ENCODE measurements at regions of chr6 and their contacts with region 1.

Region 1: DNA sequence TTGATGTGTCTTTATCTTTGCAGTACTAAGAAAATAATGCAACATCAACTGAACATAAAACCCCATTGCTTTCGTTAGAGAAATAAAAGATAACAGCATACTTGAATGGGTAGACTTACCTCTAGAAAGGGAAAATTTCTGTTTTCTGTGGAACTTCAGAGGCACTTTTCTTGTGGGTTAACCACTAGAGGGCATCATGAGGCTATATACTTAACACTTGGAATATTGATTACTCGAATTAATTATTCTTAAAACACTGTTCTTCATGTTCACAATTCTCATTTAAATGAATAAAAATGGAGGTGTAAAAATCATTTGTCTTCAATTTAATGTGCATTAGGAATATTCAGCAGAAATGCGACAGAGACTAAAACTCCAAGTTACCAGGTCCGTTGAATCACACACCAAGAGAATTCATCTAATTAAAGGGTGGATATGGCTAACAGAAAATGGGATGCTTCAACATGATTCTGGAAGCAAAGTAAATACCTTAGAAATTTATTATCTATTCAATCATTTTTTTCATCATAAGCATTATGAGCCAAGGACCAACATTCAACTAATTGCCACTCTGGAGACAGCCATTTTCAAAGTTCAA is 330.8 kb upstream of the PREP start:
- DNase-seq: no peak

Region 2: GRCh38 chr6:105966481-105966880 is 232.8 kb after region 1 on chr6:
- intact Hi-C with region 1: no loop called
- DNase-seq: no peak

Region 3: GRCh38 chr6:106223300-106223930 is 489.8 kb after region 1 on chr6:
- intact Hi-C with region 1: loop called (anchors 5 kb)
- DNase-seq: no peak

Measured in cardiac septum (tissue), 1 donor.